ENCODE measurements at regions of chr14 and their contacts with region 1.

Region 1: GRCh38 chr14:49971156-49972130 is 78.6 kb downstream of the ARF6 start:
- DNase-seq: no peak
- ATAC-seq: no peak
- H3K4me3 ChIP-seq: no peak overlapping the region
- H3K27ac ChIP-seq: no peak overlapping the region
- H3K4me1 ChIP-seq: peaks cover 79% of the 10 kb centered on the region
- H3K27me3 ChIP-seq: no peaks in the 10 kb centered on the region
- CTCF ChIP-seq: no peak
- EP300 ChIP-seq: no peak
- POLR2A ChIP-seq: no peak
- RAD21 ChIP-seq: no peak

Region 2: GRCh38 chr14:49986340-49987014 is 15.0 kb after region 1 on chr14:
- CTCF ChIA-PET with region 1: interaction called, 3 read pairs
- POLR2A ChIA-PET with region 1: interaction called, 24 read pairs
- in situ Hi-C with region 1: no loop called
- intact Hi-C with region 1: loop called (anchors 2 kb)
- DNase-seq: peak; percentile 52
- ATAC-seq: peak; percentile 55
- H3K4me3 ChIP-seq: peak overlapping the region; percentile 24 to 48 (median 36); a peak in 4 of 6 replicates
- H3K27ac ChIP-seq: peak overlapping the region; percentile 98
- H3K4me1 ChIP-seq: peaks cover 73% of the 10 kb centered on the region
- H3K27me3 ChIP-seq: no peaks in the 10 kb centered on the region
- CTCF ChIP-seq: no peak
- EP300 ChIP-seq: no peak
- POLR2A ChIP-seq: no peak
- RAD21 ChIP-seq: no peak

Measured in HepG2 (cell line).